GM12878 (cell line): ENCODE measurements at regions of chr3 and their contacts with region 1.

Region 1: GRCh38 chr3:42652611-42653302 is 740 bp upstream of the ZBTB47 start:
- DNase-seq: peak; percentile 16
- ATAC-seq: peak; percentile 84
- H3K4me3 ChIP-seq: peak overlapping the region; percentile 73; the same call in 1 of the 2 replicates
- H3K27ac ChIP-seq: peak overlapping the region; percentile 48
- H3K4me1 ChIP-seq: peaks cover 17% of the 10 kb centered on the region
- H3K27me3 ChIP-seq: no peaks in the 10 kb centered on the region
- CTCF ChIP-seq: no peak
- EP300 ChIP-seq: no peak
- POLR2A ChIP-seq: peak; percentile 73
- RAD21 ChIP-seq: no peak

Region 2: GRCh38 chr3:42600111-42600988 is 52.4 kb before region 1 on chr3 and contains the start of gene NKTR:
- CTCF ChIA-PET with region 1: no interaction called
- POLR2A ChIA-PET with region 1: interaction called, 16 read pairs
- RAD21 ChIA-PET with region 1: no interaction called
- SMC1A ChIA-PET with region 1: interaction called, 4 read pairs
- in situ Hi-C with region 1: no loop called
- intact Hi-C with region 1: no loop called
- DNase-seq: peak; percentile 98
- ATAC-seq: peak; percentile 87
- H3K4me3 ChIP-seq: peak within 1 kb of the TSS; percentile 97
- H3K27ac ChIP-seq: peak within 1 kb of the TSS; percentile 95
- H3K4me1 ChIP-seq: peaks cover 3% of the 10 kb centered on the region; the same call in 1 of the 2 replicates
- H3K27me3 ChIP-seq: no peaks in the 10 kb centered on the region
- CTCF ChIP-seq: 0 out of 6 replicates have a peak, but pooled peaks of 2 of the 3 experiments have one; percentile 0 to 1
- EP300 ChIP-seq: no peak
- POLR2A ChIP-seq: peak; percentile 94
- RAD21 ChIP-seq: no peak
- polyA plus RNA-seq, gene NKTR: 15.3 to 27.8 TPM

Region 3: GRCh38 chr3:42683875-42684598 is 31.3 kb after region 1 on chr3:
- CTCF ChIA-PET with region 1: no interaction called
- POLR2A ChIA-PET with region 1: no interaction called
- RAD21 ChIA-PET with region 1: no interaction called
- SMC1A ChIA-PET with region 1: no interaction called
- in situ Hi-C with region 1: no loop called
- intact Hi-C with region 1: no loop called
- DNase-seq: no peak
- ATAC-seq: no peak
- H3K4me3 ChIP-seq: no peak overlapping the region
- H3K27ac ChIP-seq: no peak overlapping the region
- H3K4me1 ChIP-seq: no peaks in the 10 kb centered on the region
- H3K27me3 ChIP-seq: no peaks in the 10 kb centered on the region
- CTCF ChIP-seq: no peak
- EP300 ChIP-seq: no peak
- POLR2A ChIP-seq: no peak
- RAD21 ChIP-seq: no peak

Region 4: DNA sequence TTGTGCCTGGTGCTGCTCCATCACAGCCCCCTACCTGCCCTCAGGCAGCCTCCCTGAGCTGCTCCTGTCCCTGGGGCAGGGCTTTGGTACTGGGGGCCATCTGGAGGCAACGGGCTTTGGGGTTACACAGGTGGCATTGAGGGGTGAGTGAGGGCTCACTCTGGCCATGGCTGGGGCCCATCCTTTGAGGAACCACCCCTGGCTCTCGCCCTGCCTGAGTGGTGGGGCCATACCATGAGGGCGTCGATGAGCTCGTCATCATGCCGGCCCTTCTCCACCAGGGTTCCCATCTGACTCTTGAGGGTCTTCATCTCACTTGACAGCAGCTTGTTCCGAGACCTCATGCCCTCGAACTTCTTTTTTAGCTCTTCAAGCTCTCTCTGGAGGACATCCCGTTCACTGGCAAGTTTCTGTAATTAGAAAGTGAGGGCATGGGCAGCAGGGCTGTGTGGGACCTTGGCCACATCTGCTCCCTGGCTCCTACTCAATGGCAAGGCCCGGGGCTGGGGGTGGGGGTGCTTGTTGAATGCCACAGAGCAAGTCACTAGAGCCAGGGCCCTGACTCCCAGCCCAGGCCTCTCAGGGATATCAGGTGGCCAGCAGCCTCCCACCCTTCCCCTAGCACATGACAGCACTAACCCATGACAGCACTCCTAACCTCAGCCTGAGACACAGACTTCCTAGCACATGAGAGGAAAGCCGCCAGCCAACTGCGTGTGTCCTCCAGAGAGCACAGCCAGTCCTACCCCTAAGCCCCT is 86.8 kb after region 1 on chr3:
- CTCF ChIA-PET with region 1: interaction called, 5 read pairs
- POLR2A ChIA-PET with region 1: no interaction called
- RAD21 ChIA-PET with region 1: no interaction called
- SMC1A ChIA-PET with region 1: interaction called, 7 read pairs
- in situ Hi-C with region 1: no loop called
- intact Hi-C with region 1: loop called (anchors 5 kb)
- DNase-seq: no peak
- ATAC-seq: no peak
- H3K4me3 ChIP-seq: no peak overlapping the region
- H3K27ac ChIP-seq: no peak overlapping the region
- H3K4me1 ChIP-seq: no peaks in the 10 kb centered on the region
- H3K27me3 ChIP-seq: no peaks in the 10 kb centered on the region
- CTCF ChIP-seq: no peak
- EP300 ChIP-seq: no peak
- POLR2A ChIP-seq: no peak
- RAD21 ChIP-seq: no peak